Endothelial cell of umbilical vein (primary cell): ENCODE measurements at regions of chrX and their contacts with region 1.

Region 1: GRCh38 chrX:129925305-129926092 is 19.5 kb downstream of the UTP14A start:
- DNase-seq: peak; percentile 66
- H3K4me3 ChIP-seq: no peak overlapping the region
- H3K27ac ChIP-seq: no peak overlapping the region
- H3K4me1 ChIP-seq: no peaks in the 10 kb centered on the region
- H3K27me3 ChIP-seq: no peaks in the 10 kb centered on the region
- CTCF ChIP-seq: peak; percentile 47 to 63
- POLR2A ChIP-seq: no peak

Region 2: DNA sequence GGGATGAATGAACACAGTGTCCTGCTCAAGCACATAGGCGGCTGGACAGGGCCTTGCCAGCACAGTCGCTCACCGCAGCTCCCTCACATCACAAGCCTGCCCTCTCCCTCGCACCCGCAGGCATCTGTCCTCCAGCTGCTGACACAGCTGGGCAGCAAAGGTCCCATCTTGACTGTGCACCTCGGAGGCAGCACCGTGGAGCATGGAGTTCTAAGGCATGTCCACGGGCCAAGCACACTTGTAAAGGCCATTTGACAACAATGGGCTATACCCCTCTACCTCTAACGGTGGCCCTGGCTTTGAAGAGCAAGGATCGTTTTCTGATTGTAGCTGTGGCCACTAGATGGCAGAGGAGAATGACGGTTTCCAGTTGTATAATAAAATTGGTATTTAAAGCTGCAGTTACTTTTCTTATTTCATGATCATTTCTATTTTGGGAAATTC is 324.5 kb before region 1 on chrX:
- CTCF ChIA-PET with region 1: interaction called, 11 read pairs
- POLR2A ChIA-PET with region 1: no interaction called
- dilution Hi-C with region 1: no loop called
- intact Hi-C with region 1: loop called (anchors 5 kb)
- DNase-seq: peak; percentile 21
- H3K4me3 ChIP-seq: no peak overlapping the region
- H3K27ac ChIP-seq: no peak overlapping the region
- H3K4me1 ChIP-seq: peaks cover 7% of the 10 kb centered on the region
- H3K27me3 ChIP-seq: no peaks in the 10 kb centered on the region
- CTCF ChIP-seq: peak; percentile 44 to 51
- POLR2A ChIP-seq: no peak

Region 3: DNA sequence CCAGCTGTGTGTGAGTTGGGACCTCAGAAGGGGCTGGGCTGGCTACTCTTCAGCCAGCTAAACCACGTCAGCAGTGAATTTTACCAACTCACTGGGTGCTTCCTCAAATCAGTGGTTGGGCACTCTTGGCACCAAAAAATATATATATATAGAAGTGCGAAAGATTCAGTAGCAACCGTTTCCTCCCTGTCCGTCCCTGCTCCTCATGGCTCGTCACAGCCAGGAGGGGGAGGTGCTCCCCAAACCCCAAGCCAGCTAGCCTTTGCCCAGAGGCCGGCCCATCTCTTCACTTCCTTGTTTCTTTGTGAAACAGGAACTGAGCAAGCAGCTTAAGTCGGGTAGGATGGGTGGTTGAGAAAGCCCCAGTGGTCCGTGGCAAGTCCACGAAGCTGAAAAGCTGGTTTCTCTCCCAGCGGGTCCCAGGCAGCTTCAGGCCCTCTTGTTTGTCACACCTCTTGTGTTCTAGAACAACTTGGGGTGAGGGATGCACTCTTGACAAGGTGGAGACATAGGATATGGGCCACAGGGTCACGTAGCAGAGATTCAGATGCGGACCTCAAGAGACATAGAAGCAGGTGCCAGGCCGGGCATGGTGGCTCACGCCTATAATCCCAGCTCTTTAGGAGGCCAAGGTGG is 152.6 kb before region 1 on chrX:
- CTCF ChIA-PET with region 1: no interaction called
- POLR2A ChIA-PET with region 1: no interaction called
- dilution Hi-C with region 1: no loop called
- intact Hi-C with region 1: no loop called
- DNase-seq: no peak
- H3K4me3 ChIP-seq: no peak overlapping the region
- H3K27ac ChIP-seq: no peak overlapping the region
- H3K4me1 ChIP-seq: peaks cover 14% of the 10 kb centered on the region
- H3K27me3 ChIP-seq: no peaks in the 10 kb centered on the region
- CTCF ChIP-seq: no peak
- POLR2A ChIP-seq: no peak

Region 4: GRCh38 chrX:130024127-130024526 is 98.6 kb after region 1 on chrX:
- CTCF ChIA-PET with region 1: interaction called, 78 read pairs
- POLR2A ChIA-PET with region 1: no interaction called
- dilution Hi-C with region 1: no loop called
- intact Hi-C with region 1: loop called (anchors 1 kb)
- DNase-seq: peak; percentile 28
- H3K4me3 ChIP-seq: no peak overlapping the region
- H3K27ac ChIP-seq: no peak overlapping the region
- H3K4me1 ChIP-seq: peaks cover 4% of the 10 kb centered on the region
- H3K27me3 ChIP-seq: no peaks in the 10 kb centered on the region
- CTCF ChIP-seq: no peak
- POLR2A ChIP-seq: no peak

Region 5: GRCh38 chrX:130186651-130187050 is 261.2 kb after region 1 on chrX:
- CTCF ChIA-PET with region 1: no interaction called
- POLR2A ChIA-PET with region 1: no interaction called
- dilution Hi-C with region 1: no loop called
- intact Hi-C with region 1: loop called (anchors 5 kb)
- DNase-seq: no peak
- H3K4me3 ChIP-seq: no peak overlapping the region
- H3K27ac ChIP-seq: no peak overlapping the region
- H3K4me1 ChIP-seq: no peaks in the 10 kb centered on the region
- H3K27me3 ChIP-seq: no peaks in the 10 kb centered on the region
- CTCF ChIP-seq: no peak
- POLR2A ChIP-seq: no peak

Region 6: DNA sequence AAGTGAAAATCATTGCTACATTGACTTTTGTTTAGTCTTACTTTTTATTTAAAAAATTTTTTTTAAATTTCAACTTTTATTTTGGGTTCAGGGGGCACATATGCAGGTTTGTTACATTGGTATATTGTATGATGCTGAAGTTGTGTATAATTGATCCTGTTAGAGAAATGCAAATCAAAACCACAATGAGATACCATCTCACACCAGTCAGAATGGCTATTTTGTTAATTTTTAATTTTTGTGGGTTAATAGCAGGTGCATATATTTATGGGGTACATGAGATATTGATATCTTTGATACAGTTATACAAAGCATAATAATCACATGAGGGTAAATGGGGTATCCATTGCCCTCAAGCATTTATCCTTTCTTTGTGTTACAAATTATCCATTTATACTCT is 510.4 kb after region 1 on chrX:
- CTCF ChIA-PET with region 1: no interaction called
- POLR2A ChIA-PET with region 1: no interaction called
- dilution Hi-C with region 1: no loop called
- intact Hi-C with region 1: no loop called
- DNase-seq: no peak
- H3K4me3 ChIP-seq: no peak overlapping the region
- H3K27ac ChIP-seq: no peak overlapping the region
- H3K4me1 ChIP-seq: no peaks in the 10 kb centered on the region
- H3K27me3 ChIP-seq: no peaks in the 10 kb centered on the region
- CTCF ChIP-seq: no peak
- POLR2A ChIP-seq: no peak